ENCODE measurements at regions of chr19 and their contacts with region 1.

Region 1: GRCh38 chr19:45079063-45079910 is at the start of gene GEMIN7:
- DNase-seq: peak; percentile 66 to 77 (median 72)
- H3K4me3 ChIP-seq: peak within 1 kb of the TSS; percentile 82 to 95
- H3K4me3 Mint-ChIP-seq: peak within 1 kb of the TSS; percentile 89 to 98 (median 93)
- H3K27ac ChIP-seq: peak within 1 kb of the TSS; percentile 80
- H3K27ac Mint-ChIP-seq: peak within 1 kb of the TSS; percentile 84 to 95 (median 88)
- H3K4me1 ChIP-seq: peaks cover 51% of the 10 kb centered on the region
- H3K4me1 Mint-ChIP-seq: peaks cover 25 to 60% (median 44%) of the 10 kb centered on the region in 4 donors
- H3K27me3 ChIP-seq: no peaks in the 10 kb centered on the region
- H3K27me3 Mint-ChIP-seq: no peaks in the 10 kb centered on the region
- total RNA-seq, gene GEMIN7: 15.9 to 17.6 TPM

Region 2: GRCh38 chr19:45038931-45039893 is 40.1 kb before region 1 on chr19 and contains the start of gene CLASRP:
- CTCF ChIA-PET with region 1: interaction called, 3 read pairs
- POLR2A ChIA-PET with region 1: interaction called, 16 read pairs
- intact Hi-C with region 1: loop called (anchors 1 kb)
- DNase-seq: peak; percentile 85 to 88 (median 86)
- H3K4me3 ChIP-seq: peak within 1 kb of the TSS; percentile 45 to 62
- H3K4me3 Mint-ChIP-seq: peak within 1 kb of the TSS; percentile 95 to 99 (median 98)
- H3K27ac ChIP-seq: peak within 1 kb of the TSS; percentile 98
- H3K27ac Mint-ChIP-seq: peak within 1 kb of the TSS; percentile 88 to 99 (median 98)
- H3K4me1 ChIP-seq: peaks cover 34% of the 10 kb centered on the region
- H3K4me1 Mint-ChIP-seq: peaks cover 21 to 46% (median 29%) of the 10 kb centered on the region in 4 donors
- H3K27me3 ChIP-seq: no peaks in the 10 kb centered on the region
- H3K27me3 Mint-ChIP-seq: no peaks in the 10 kb centered on the region
- total RNA-seq, gene CLASRP: 156 to 163 TPM